Activated CD4-positive, alpha-beta memory T cell treated with anti-CD3 and anti-CD28 coated beads for 36 hours (primary cell): ENCODE measurements at regions of chr1 and their contacts with region 1.

Region 1: GRCh38 chr1:47997289-47998200 is at the start of gene TRABD2B:
- DNase-seq: peak; percentile 72
- H3K4me3 Mint-ChIP-seq: peak within 1 kb of the TSS; percentile 63
- H3K27ac Mint-ChIP-seq: no peak within 1 kb of the TSS
- H3K4me1 Mint-ChIP-seq: peaks cover 8% of the 10 kb centered on the region
- H3K27me3 Mint-ChIP-seq: peaks cover 47% of the 10 kb centered on the region
- total RNA-seq, gene TRABD2B: not detected

Region 2: GRCh38 chr1:47763591-47764171 is 233.9 kb before region 1 on chr1:
- CTCF ChIA-PET with region 1: no interaction called
- POLR2A ChIA-PET with region 1: no interaction called
- intact Hi-C with region 1: no loop called
- DNase-seq: no peak
- H3K4me3 Mint-ChIP-seq: no peak overlapping the region
- H3K27ac Mint-ChIP-seq: no peak overlapping the region
- H3K4me1 Mint-ChIP-seq: no peaks in the 10 kb centered on the region
- H3K27me3 Mint-ChIP-seq: peaks cover 4% of the 10 kb centered on the region

Region 3: DNA sequence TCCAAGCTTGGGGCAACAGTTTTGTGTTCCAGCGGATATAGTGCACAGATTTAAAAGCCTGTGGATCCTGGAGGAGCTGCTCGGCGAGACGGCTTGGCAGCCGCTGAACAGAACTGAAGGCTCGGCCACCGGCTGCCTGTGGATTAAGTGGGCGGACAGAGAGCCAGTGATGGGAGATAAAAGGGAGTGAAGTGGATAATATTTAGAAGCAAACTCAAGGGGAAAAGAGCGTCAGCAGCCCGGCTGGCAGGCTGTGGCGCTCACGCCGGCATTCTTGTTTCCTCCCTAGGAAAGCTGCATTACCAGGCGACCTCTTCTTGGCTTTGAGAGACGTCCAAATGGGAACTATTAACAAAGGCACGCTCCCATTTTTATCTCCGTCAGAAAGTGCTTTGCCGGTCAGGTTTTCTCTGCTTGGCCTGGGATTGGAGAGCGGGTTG is 10.8 kb before region 1 on chr1:
- CTCF ChIA-PET with region 1: interaction called, 13 read pairs
- POLR2A ChIA-PET with region 1: no interaction called
- intact Hi-C with region 1: no loop called
- DNase-seq: no peak
- H3K4me3 Mint-ChIP-seq: no peak overlapping the region
- H3K27ac Mint-ChIP-seq: no peak overlapping the region
- H3K4me1 Mint-ChIP-seq: peaks cover 4% of the 10 kb centered on the region
- H3K27me3 Mint-ChIP-seq: peaks cover 26% of the 10 kb centered on the region

Region 4: GRCh38 chr1:48026275-48026674 is 28.7 kb after region 1 on chr1:
- CTCF ChIA-PET with region 1: interaction called, 11 read pairs
- POLR2A ChIA-PET with region 1: no interaction called
- intact Hi-C with region 1: no loop called
- DNase-seq: no peak
- H3K4me3 Mint-ChIP-seq: no peak overlapping the region
- H3K27ac Mint-ChIP-seq: no peak overlapping the region
- H3K4me1 Mint-ChIP-seq: no peaks in the 10 kb centered on the region
- H3K27me3 Mint-ChIP-seq: peaks cover 4% of the 10 kb centered on the region

Region 5: DNA sequence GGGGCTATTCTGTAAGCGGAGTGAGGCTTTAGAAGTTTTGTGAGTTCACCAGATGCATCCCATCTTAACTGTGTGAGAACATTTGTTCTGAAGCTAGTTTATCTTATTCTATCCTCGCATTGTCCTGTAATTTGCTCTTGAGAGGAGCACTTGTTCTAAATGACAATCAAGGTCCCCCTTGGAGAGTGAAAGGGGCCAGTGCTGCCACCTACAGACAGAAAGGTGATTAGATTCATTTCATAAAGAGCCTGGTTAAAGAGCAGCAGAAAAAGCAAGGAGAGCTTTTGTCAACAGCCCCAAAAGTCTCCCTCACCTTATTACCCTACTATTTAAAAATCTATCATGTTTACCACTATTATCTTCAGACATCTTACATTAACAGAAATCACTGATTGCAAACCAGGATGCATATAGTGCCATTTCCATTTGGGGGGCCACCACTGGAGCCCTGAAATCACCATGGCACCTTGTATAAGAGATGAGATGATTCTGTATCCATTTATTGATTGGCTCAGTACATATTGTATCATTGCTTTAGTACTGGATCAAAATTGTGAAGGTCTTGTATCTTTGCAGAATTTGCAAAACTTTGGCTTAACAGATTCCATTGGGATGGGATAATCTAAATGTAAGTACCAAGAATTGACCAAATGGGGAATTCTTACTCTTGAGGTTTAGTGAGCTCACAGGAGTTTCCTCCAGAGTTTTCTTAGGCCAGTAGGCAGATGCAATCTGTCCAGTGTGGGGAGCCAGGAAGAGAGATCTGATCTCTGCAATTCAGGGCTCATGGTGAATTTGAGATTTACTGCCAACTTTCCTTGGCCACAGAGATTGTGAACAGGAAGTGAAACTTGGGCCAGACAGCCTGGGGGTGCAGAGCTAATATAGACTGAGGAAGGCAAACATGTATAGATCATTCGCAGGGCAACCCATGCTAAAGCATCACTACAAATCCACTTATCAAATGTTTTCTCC is 63.9 kb after region 1 on chr1:
- CTCF ChIA-PET with region 1: interaction called, 4 read pairs
- POLR2A ChIA-PET with region 1: no interaction called
- intact Hi-C with region 1: loop called (anchors 1 kb)
- DNase-seq: peak; percentile 31
- H3K4me3 Mint-ChIP-seq: no peak overlapping the region
- H3K27ac Mint-ChIP-seq: no peak overlapping the region
- H3K4me1 Mint-ChIP-seq: no peaks in the 10 kb centered on the region
- H3K27me3 Mint-ChIP-seq: no peaks in the 10 kb centered on the region